ENCODE measurements at regions of chr1 and their contacts with region 1.

Region 1: GRCh38 chr1:233790662-233791375 is 113.7 kb upstream of the SLC35F3 start:
- DNase-seq: peak; percentile 38
- H3K4me3 Mint-ChIP-seq: no peak overlapping the region
- H3K27ac Mint-ChIP-seq: no peak overlapping the region
- H3K4me1 Mint-ChIP-seq: no peaks in the 10 kb centered on the region
- H3K27me3 Mint-ChIP-seq: peaks cover 22% of the 10 kb centered on the region

Region 2: DNA sequence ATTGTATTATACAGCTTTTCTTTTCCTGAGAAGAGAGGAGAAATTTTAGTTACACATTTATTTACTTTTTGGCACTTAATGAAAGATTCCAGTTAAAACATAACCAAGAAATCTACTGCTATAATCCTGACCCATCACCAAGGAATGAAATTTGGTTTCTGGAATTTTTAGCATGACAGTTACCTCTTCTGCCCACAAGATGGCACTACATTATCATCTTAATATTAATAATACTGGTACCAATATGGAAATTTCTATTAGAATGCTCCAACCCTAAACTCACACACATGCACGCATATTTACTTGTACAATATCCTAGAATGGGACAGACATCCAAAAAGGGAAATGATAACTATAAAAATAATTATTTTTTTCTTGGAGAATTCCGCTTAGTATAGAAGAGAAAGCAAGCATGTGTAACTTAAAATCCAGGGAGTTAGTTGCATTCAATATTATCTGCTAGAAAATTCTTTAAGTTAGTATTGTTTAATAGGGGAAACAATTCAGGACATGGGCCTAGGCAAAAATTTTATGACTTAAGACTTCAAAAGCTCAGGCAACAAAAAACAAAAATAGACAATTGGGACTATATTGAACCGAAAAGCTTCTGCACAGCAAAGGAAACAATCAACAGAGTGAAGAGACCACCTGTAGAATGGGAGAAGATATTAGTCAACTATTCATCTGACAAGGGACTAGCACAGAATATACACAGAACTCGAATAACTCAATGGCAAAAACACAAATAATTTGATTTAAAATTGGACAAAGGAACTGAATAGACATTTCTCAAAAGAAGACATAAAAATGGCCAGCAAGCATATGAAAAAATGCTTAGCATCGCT is 425.9 kb before region 1 on chr1:
- CTCF ChIA-PET with region 1: no interaction called
- intact Hi-C with region 1: loop called (anchors 10 kb)
- DNase-seq: no peak
- H3K4me3 Mint-ChIP-seq: no peak overlapping the region
- H3K27ac Mint-ChIP-seq: no peak overlapping the region
- H3K4me1 Mint-ChIP-seq: no peaks in the 10 kb centered on the region
- H3K27me3 Mint-ChIP-seq: peaks cover 5% of the 10 kb centered on the region

Region 3: GRCh38 chr1:233440951-233441401 is 349.8 kb before region 1 on chr1:
- CTCF ChIA-PET with region 1: interaction called, 7 read pairs
- intact Hi-C with region 1: loop called (anchors 1 kb)
- DNase-seq: peak; percentile 8
- H3K4me3 Mint-ChIP-seq: no peak overlapping the region
- H3K27ac Mint-ChIP-seq: no peak overlapping the region
- H3K4me1 Mint-ChIP-seq: no peaks in the 10 kb centered on the region
- H3K27me3 Mint-ChIP-seq: peaks cover 17% of the 10 kb centered on the region

Region 4: GRCh38 chr1:233518349-233518748 is 272.5 kb before region 1 on chr1:
- CTCF ChIA-PET with region 1: interaction called, 3 read pairs
- intact Hi-C with region 1: loop called (anchors 1 kb)
- DNase-seq: peak; percentile 50
- H3K4me3 Mint-ChIP-seq: no peak overlapping the region
- H3K27ac Mint-ChIP-seq: no peak overlapping the region
- H3K4me1 Mint-ChIP-seq: peaks cover 3% of the 10 kb centered on the region
- H3K27me3 Mint-ChIP-seq: peaks cover 8% of the 10 kb centered on the region

Region 5: DNA sequence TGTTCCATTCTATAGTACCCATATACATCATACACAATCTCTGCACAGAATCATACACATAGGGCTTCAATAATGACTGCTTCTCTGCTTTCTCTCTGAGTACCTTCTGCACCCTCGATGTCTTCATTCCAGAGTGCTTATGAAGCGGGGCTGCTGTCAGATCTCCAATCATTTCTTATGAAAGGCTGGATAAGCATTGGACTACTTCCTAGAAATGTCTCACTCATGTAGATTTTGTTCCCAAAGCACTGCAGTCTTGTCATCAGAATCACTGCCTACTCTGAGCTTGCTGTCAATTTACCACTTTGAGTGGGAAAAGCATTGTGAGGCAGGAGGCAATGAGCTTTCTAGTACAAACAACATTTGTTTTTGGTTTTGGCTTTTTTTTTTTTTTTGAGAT is 292.6 kb after region 1 on chr1:
- CTCF ChIA-PET with region 1: no interaction called
- intact Hi-C with region 1: no loop called
- DNase-seq: no peak
- H3K4me3 Mint-ChIP-seq: no peak overlapping the region
- H3K27ac Mint-ChIP-seq: no peak overlapping the region
- H3K4me1 Mint-ChIP-seq: no peaks in the 10 kb centered on the region
- H3K27me3 Mint-ChIP-seq: peaks cover 17% of the 10 kb centered on the region

Measured in activated naive CD4-positive, alpha-beta T cell treated with anti-CD3 and anti-CD28 coated beads for 36 hours (primary cell).